ENCODE measurements at regions of chr15 and their contacts with region 1.

Region 1: GRCh38 chr15:30903497-30904201 is at the start of gene FAN1:
- DNase-seq: peak; percentile 89
- H3K4me3 Mint-ChIP-seq: peak within 1 kb of the TSS; percentile 90
- H3K27ac Mint-ChIP-seq: peak within 1 kb of the TSS; percentile 56
- H3K4me1 Mint-ChIP-seq: peaks cover 23% of the 10 kb centered on the region
- H3K27me3 Mint-ChIP-seq: peaks cover 5% of the 10 kb centered on the region
- total RNA-seq, gene FAN1: 12.6 to 15.0 TPM

Region 2: GRCh38 chr15:31136016-31136415 is 232.4 kb after region 1 on chr15:
- CTCF ChIA-PET with region 1: no interaction called
- POLR2A ChIA-PET with region 1: no interaction called
- intact Hi-C with region 1: loop called (anchors 10 kb)
- DNase-seq: no peak
- H3K4me3 Mint-ChIP-seq: no peak overlapping the region
- H3K27ac Mint-ChIP-seq: no peak overlapping the region
- H3K4me1 Mint-ChIP-seq: no peaks in the 10 kb centered on the region
- H3K27me3 Mint-ChIP-seq: peaks cover 2% of the 10 kb centered on the region

Measured in activated CD4-positive, alpha-beta memory T cell treated with anti-CD3 and anti-CD28 coated beads for 36 hours (primary cell).